ENCODE measurements at regions of chr21 and their contacts with region 1.

Region 1: GRCh38 chr21:21559285-21560045 is 561.3 kb downstream of the NCAM2 start:
- DNase-seq: no peak
- ATAC-seq: no peak
- H3K4me3 ChIP-seq: no peak overlapping the region
- H3K27ac ChIP-seq: no peak overlapping the region
- H3K4me1 ChIP-seq: no peaks in the 10 kb centered on the region
- H3K27me3 ChIP-seq: no peaks in the 10 kb centered on the region
- CTCF ChIP-seq: no peak
- EP300 ChIP-seq: no peak
- POLR2A ChIP-seq: no peak
- RAD21 ChIP-seq: no peak

Region 2: DNA sequence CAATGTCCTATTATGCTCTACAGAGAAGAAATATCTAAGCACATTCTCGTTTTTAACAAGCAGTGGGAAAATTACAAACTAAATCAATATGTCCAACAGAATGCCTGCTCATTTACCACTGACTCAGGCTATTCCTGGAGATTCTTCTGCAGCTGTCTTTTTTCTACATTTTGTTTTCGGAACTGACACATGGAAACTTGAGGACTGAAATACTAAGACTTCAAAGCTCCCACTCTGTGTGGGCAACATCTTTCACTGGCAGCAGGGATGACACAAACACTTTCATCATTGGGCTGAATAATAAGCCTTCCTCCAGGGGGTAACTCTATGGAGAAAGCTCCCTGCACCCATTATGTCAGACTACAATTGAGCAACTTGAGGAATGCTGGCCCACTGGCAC is 736.8 kb before region 1 on chr21:
- CTCF ChIA-PET with region 1: no interaction called
- POLR2A ChIA-PET with region 1: no interaction called
- in situ Hi-C with region 1: no loop called
- intact Hi-C with region 1: loop called (anchors 5 kb)
- DNase-seq: no peak
- ATAC-seq: no peak
- H3K4me3 ChIP-seq: no peak overlapping the region
- H3K27ac ChIP-seq: no peak overlapping the region
- H3K4me1 ChIP-seq: no peaks in the 10 kb centered on the region
- H3K27me3 ChIP-seq: no peaks in the 10 kb centered on the region
- CTCF ChIP-seq: no peak
- EP300 ChIP-seq: no peak
- POLR2A ChIP-seq: no peak
- RAD21 ChIP-seq: no peak